HepG2 (cell line): ENCODE measurements at regions of chr18 and their contacts with region 1.

Region 1: GRCh38 chr18:5393779-5394178 is 98.3 kb upstream of the ZBTB14 start:
- DNase-seq: no peak
- ATAC-seq: no peak
- H3K4me3 ChIP-seq: no peak overlapping the region
- H3K27ac ChIP-seq: no peak overlapping the region
- H3K4me1 ChIP-seq: no peaks in the 10 kb centered on the region
- H3K27me3 ChIP-seq: peaks cover 0 to 18% of the 10 kb centered on the region in 2 experiments; a peak in 3 of 5 replicates
- CTCF ChIP-seq: no peak
- EP300 ChIP-seq: no peak
- POLR2A ChIP-seq: no peak
- RAD21 ChIP-seq: no peak

Region 2: DNA sequence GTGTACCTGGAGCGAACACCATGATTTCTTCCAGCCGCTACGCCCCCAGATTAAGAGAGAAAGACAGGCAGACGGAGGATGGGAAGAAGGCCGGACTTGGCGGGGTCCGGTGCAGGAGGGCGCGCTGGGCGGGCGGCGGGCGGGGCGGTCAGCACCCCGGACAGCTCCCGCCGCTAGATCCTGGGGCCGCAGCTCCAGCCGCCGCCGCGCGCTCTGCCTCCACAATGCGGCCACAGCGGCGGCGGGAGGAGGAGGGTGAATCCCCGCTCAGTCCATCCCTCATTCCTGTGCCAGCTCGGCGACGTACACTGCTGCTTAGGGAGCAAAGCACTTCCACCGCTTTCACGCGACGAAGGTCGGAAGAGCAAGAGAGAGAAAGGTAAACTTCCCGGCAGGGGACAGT is 196.7 kb before region 1 on chr18 and contains the start of gene AKAIN1:
- CTCF ChIA-PET with region 1: no interaction called
- POLR2A ChIA-PET with region 1: no interaction called
- in situ Hi-C with region 1: no loop called
- intact Hi-C with region 1: no loop called
- DNase-seq: peak; percentile 1
- ATAC-seq: peak; percentile 99
- H3K4me3 ChIP-seq: no peak within 1 kb of the TSS
- H3K27ac ChIP-seq: no peak within 1 kb of the TSS
- H3K4me1 ChIP-seq: no peaks in the 10 kb centered on the region
- H3K27me3 ChIP-seq: peaks cover 0 to 12% of the 10 kb centered on the region in 2 experiments; a peak in 1 of 5 replicates
- CTCF ChIP-seq: no peak
- EP300 ChIP-seq: no peak
- POLR2A ChIP-seq: no peak
- RAD21 ChIP-seq: peak; percentile 38; the same call in 1 of the 2 replicates
- total RNA-seq, gene AKAIN1: not detected in 2 replicates

Region 3: GRCh38 chr18:5309888-5310470 is 83.8 kb before region 1 on chr18:
- CTCF ChIA-PET with region 1: no interaction called
- POLR2A ChIA-PET with region 1: no interaction called
- in situ Hi-C with region 1: no loop called
- intact Hi-C with region 1: no loop called
- DNase-seq: no peak
- ATAC-seq: peak; percentile 38; the same call in 2 of the 3 replicates
- H3K4me3 ChIP-seq: peak overlapping the region in 1 of 3 experiments; percentile 3; a peak in 1 of 6 replicates
- H3K27ac ChIP-seq: no peak overlapping the region
- H3K4me1 ChIP-seq: peaks cover 27% of the 10 kb centered on the region
- H3K27me3 ChIP-seq: no peaks in the 10 kb centered on the region
- CTCF ChIP-seq: no peak
- EP300 ChIP-seq: no peak
- POLR2A ChIP-seq: no peak
- RAD21 ChIP-seq: no peak

Region 4: GRCh38 chr18:5380586-5380985 is 13.2 kb before region 1 on chr18:
- CTCF ChIA-PET with region 1: no interaction called
- POLR2A ChIA-PET with region 1: no interaction called
- in situ Hi-C with region 1: no loop called
- intact Hi-C with region 1: loop called (anchors 1 kb)
- DNase-seq: no peak
- ATAC-seq: no peak
- H3K4me3 ChIP-seq: no peak overlapping the region
- H3K27ac ChIP-seq: no peak overlapping the region
- H3K4me1 ChIP-seq: no peaks in the 10 kb centered on the region
- H3K27me3 ChIP-seq: peaks cover 0 to 16% of the 10 kb centered on the region in 2 experiments; a peak in 1 of 5 replicates
- CTCF ChIP-seq: no peak
- EP300 ChIP-seq: no peak
- POLR2A ChIP-seq: no peak
- RAD21 ChIP-seq: no peak